Activated CD4-positive, alpha-beta memory T cell treated with anti-CD3 and anti-CD28 coated beads for 36 hours (primary cell): ENCODE measurements at regions of chr6 and their contacts with region 1.

Region 1: GRCh38 chr6:112180095-112180820 is 74.1 kb downstream of the LAMA4 start:
- DNase-seq: peak; percentile 26
- H3K4me3 Mint-ChIP-seq: no peak overlapping the region
- H3K27ac Mint-ChIP-seq: no peak overlapping the region
- H3K4me1 Mint-ChIP-seq: no peaks in the 10 kb centered on the region
- H3K27me3 Mint-ChIP-seq: peaks cover 16% of the 10 kb centered on the region

Region 2: DNA sequence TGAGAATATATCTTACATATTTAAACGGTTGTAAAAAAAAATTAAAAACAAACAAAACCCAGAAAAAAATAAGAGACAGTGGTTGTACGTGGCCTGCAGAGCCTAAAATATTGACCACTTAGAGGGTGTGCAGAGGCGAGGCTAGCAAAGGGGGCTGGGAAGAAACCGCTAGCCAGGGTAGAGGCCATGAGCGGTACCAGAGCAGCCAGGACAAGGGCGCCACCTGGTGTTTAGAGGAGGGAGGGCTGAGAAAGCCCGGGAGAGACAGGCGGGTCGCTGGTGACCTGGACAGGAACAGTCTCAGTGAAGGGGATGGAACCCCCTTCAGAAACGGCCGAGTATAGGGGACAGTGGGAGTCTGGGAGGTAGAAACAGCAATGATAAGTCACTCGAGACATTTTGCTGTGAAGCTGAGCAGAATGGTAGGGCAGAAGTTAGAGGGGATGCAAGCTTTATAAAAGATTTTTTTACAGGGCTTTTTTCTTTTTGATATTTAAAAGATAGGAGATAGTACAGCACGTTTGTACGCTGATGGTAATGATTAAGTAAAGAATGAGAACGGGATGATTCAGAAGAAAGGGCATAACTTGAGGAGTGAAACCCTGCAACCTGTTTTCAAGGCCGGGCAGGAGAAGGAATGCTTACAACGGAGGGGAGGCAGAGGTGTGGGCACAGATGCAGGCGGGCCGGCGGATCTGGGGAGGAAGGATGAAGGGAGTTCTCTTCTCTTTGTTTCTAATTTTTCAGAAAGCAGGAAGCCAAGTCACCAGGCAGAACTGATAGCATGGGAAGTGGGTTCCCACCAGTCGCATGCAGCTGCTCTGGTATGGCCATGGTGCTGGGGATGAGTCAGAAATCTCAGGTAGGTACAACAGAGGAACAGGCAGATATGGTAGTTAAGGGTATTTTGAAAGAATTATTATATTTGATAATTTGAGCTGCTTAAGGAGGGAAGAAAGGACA is 16.7 kb before region 1 on chr6:
- CTCF ChIA-PET with region 1: interaction called, 27 read pairs
- POLR2A ChIA-PET with region 1: no interaction called
- intact Hi-C with region 1: no loop called
- DNase-seq: peak; percentile 88
- H3K4me3 Mint-ChIP-seq: peak overlapping the region; percentile 36
- H3K27ac Mint-ChIP-seq: no peak overlapping the region
- H3K4me1 Mint-ChIP-seq: peaks cover 16% of the 10 kb centered on the region
- H3K27me3 Mint-ChIP-seq: peaks cover 43% of the 10 kb centered on the region

Region 3: GRCh38 chr6:112298021-112298745 is 117.9 kb after region 1 on chr6:
- CTCF ChIA-PET with region 1: interaction called, 10 read pairs
- POLR2A ChIA-PET with region 1: no interaction called
- intact Hi-C with region 1: no loop called
- DNase-seq: no peak
- H3K4me3 Mint-ChIP-seq: no peak overlapping the region
- H3K27ac Mint-ChIP-seq: no peak overlapping the region
- H3K4me1 Mint-ChIP-seq: no peaks in the 10 kb centered on the region
- H3K27me3 Mint-ChIP-seq: peaks cover 11% of the 10 kb centered on the region

Region 4: DNA sequence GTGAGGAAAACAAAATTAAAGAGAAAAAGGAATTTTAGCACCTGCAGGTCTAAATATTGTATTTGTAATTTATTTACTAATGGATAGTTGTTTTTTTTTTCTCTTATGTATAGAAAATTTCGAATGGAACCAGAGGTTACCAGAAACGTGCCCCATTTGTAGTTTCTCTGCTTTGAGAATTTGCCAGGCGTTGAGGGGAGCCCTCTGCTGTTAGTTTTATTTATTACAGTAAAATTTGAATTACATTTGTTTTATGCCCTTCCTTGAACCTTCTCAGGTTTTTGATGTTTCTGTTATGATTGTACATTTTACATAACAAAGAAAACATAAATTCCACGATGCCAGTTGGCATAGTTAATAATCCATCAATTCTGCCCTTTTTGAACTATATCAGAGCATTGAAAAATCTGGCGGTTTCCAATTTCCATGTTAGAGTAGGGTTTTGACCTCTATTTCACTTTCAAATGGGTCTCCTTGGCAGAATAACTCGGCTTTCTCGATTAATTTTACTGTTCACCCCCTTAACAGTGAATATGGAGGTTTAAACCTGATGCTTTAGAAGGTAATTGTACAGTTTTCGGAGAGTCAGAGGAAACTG is 131.8 kb after region 1 on chr6:
- CTCF ChIA-PET with region 1: interaction called, 156 read pairs
- POLR2A ChIA-PET with region 1: no interaction called
- intact Hi-C with region 1: loop called (anchors 1 kb)
- DNase-seq: peak; percentile 12
- H3K4me3 Mint-ChIP-seq: no peak overlapping the region
- H3K27ac Mint-ChIP-seq: no peak overlapping the region
- H3K4me1 Mint-ChIP-seq: no peaks in the 10 kb centered on the region
- H3K27me3 Mint-ChIP-seq: peaks cover 15% of the 10 kb centered on the region

Region 5: DNA sequence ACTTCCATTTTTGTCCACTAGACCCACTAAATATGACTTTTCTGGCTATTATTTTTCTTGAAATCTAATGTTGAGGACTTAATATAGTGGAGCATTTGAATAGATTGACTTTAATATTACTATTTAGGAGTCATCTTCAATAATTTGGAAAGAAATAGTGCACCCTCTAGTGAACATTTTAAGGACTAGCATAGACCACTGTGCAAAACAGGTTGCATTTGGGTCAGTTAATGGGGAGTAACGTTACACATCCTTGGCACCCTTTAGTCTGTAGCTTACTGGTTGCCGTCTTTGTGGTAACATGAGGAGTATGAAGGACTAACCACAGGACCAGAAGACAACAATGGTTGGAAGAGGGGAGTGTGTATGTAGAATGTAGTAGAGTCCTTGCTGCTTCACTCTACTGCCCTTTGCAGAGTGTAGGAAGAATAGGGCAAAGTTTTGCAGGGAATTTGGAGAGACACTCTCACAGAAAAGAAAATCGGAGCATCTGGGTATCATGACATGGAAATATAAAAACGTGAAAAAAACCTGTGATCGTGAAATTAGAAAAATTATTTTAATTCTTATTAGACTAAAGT is 192.1 kb after region 1 on chr6:
- CTCF ChIA-PET with region 1: interaction called, 12 read pairs
- POLR2A ChIA-PET with region 1: no interaction called
- intact Hi-C with region 1: no loop called
- DNase-seq: no peak
- H3K4me3 Mint-ChIP-seq: no peak overlapping the region
- H3K27ac Mint-ChIP-seq: no peak overlapping the region
- H3K4me1 Mint-ChIP-seq: no peaks in the 10 kb centered on the region
- H3K27me3 Mint-ChIP-seq: peaks cover 11% of the 10 kb centered on the region

Region 6: GRCh38 chr6:113858480-113859348 is 1678.5 kb after region 1 on chr6:
- CTCF ChIA-PET with region 1: interaction called, 8 read pairs
- POLR2A ChIA-PET with region 1: no interaction called
- intact Hi-C with region 1: loop called (anchors 5 kb)
- DNase-seq: peak; percentile 86
- H3K4me3 Mint-ChIP-seq: no peak overlapping the region
- H3K27ac Mint-ChIP-seq: no peak overlapping the region
- H3K4me1 Mint-ChIP-seq: peaks cover 16% of the 10 kb centered on the region
- H3K27me3 Mint-ChIP-seq: peaks cover 30% of the 10 kb centered on the region